B cell (primary cell): ENCODE measurements at regions of chr6 and their contacts with region 1.

Region 1: GRCh38 chr6:132354512-132355167 is 46.6 kb downstream of the MOXD1 start:
- DNase-seq: peak; percentile 94
- ATAC-seq: peak; percentile 87
- H3K4me3 ChIP-seq: peak overlapping the region in 4 of 5 experiments; percentile 10 to 37 (median 17)
- H3K4me3 Mint-ChIP-seq: peak overlapping the region; percentile 67
- H3K27ac ChIP-seq: peak overlapping the region; percentile 89 to 95
- H3K27ac Mint-ChIP-seq: peak overlapping the region; percentile 89
- H3K4me1 ChIP-seq: peaks cover 43 to 63% of the 10 kb centered on the region in 2 donors
- H3K4me1 Mint-ChIP-seq: peaks cover 67% of the 10 kb centered on the region
- H3K27me3 ChIP-seq: no peaks in the 10 kb centered on the region
- H3K27me3 Mint-ChIP-seq: no peaks in the 10 kb centered on the region
- CTCF ChIP-seq: no peak

Region 2: GRCh38 chr6:131627724-131628682 is 726.6 kb before region 1 on chr6 and contains the start of gene MED23:
- CTCF ChIA-PET with region 1: no interaction called
- POLR2A ChIA-PET with region 1: no interaction called
- intact Hi-C with region 1: loop called (anchors 2 kb)
- DNase-seq: peak; percentile 97
- ATAC-seq: peak; percentile 97
- H3K4me3 ChIP-seq: peak within 1 kb of the TSS; percentile 82 to 95 (median 87)
- H3K4me3 Mint-ChIP-seq: peak within 1 kb of the TSS; percentile 98
- H3K27ac ChIP-seq: peak within 1 kb of the TSS; percentile 58 to 71
- H3K27ac Mint-ChIP-seq: peak within 1 kb of the TSS; percentile 94
- H3K4me1 ChIP-seq: peaks cover 9 to 11% of the 10 kb centered on the region in 2 donors
- H3K4me1 Mint-ChIP-seq: peaks cover 25% of the 10 kb centered on the region
- H3K27me3 ChIP-seq: no peaks in the 10 kb centered on the region
- H3K27me3 Mint-ChIP-seq: peaks cover under 1% of the 10 kb centered on the region
- CTCF ChIP-seq: peak; percentile 97
- total RNA-seq, gene MED23: 55.4 and 57.1 TPM in 2 replicates

Region 3: GRCh38 chr6:132380358-132381029 is 25.9 kb after region 1 on chr6:
- CTCF ChIA-PET with region 1: interaction called, 6 read pairs
- POLR2A ChIA-PET with region 1: interaction called, 16 read pairs
- intact Hi-C with region 1: loop called (anchors 1 kb)
- DNase-seq: no peak
- ATAC-seq: no peak
- H3K4me3 ChIP-seq: no peak overlapping the region
- H3K4me3 Mint-ChIP-seq: no peak overlapping the region
- H3K27ac ChIP-seq: no peak overlapping the region
- H3K27ac Mint-ChIP-seq: no peak overlapping the region
- H3K4me1 ChIP-seq: peaks cover 4 to 14% of the 10 kb centered on the region in 2 donors
- H3K4me1 Mint-ChIP-seq: peaks cover 19% of the 10 kb centered on the region
- H3K27me3 ChIP-seq: no peaks in the 10 kb centered on the region
- H3K27me3 Mint-ChIP-seq: no peaks in the 10 kb centered on the region
- CTCF ChIP-seq: no peak

Region 4: GRCh38 chr6:132401120-132401945 is 46.7 kb after region 1 on chr6 and contains the start of gene MOXD1:
- CTCF ChIA-PET with region 1: interaction called, 3 read pairs
- POLR2A ChIA-PET with region 1: no interaction called
- intact Hi-C with region 1: loop called (anchors 10 kb)
- DNase-seq: peak; percentile 64
- ATAC-seq: peak; percentile 83
- H3K4me3 ChIP-seq: peak within 1 kb of the TSS; percentile 51 to 84 (median 73)
- H3K4me3 Mint-ChIP-seq: peak within 1 kb of the TSS; percentile 88
- H3K27ac ChIP-seq: no peak within 1 kb of the TSS
- H3K27ac Mint-ChIP-seq: peak within 1 kb of the TSS; percentile 76
- H3K4me1 ChIP-seq: peaks cover 13 to 14% of the 10 kb centered on the region in 2 donors
- H3K4me1 Mint-ChIP-seq: peaks cover 24% of the 10 kb centered on the region
- H3K27me3 ChIP-seq: peaks cover 0 to 19% (median 11%) of the 10 kb centered on the region in 4 experiments
- H3K27me3 Mint-ChIP-seq: peaks cover 20% of the 10 kb centered on the region
- CTCF ChIP-seq: no peak
- total RNA-seq, gene MOXD1: 6.7 and 7.0 TPM in 2 replicates

Region 5: DNA sequence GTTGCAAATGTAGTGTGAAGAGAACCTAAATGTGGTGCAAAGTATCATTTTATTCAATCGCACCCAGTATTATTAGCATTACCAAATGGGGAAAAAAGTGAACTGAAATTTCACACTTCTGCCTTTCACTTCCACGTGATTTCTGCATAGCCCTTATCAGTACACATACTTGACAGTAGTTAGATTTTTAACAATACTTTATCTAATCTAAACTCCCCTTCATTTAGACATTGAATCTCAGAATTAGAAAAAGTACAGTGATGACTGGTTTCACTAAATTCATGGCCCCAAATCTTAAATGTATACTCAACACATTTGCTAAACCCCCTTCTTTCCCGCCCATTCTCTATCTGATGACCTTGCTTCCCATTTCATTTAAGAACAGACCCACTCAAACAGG is 144.0 kb after region 1 on chr6:
- CTCF ChIA-PET with region 1: interaction called, 10 read pairs
- POLR2A ChIA-PET with region 1: no interaction called
- intact Hi-C with region 1: loop called (anchors 5 kb)
- DNase-seq: peak; percentile 71
- ATAC-seq: peak; percentile 70
- H3K4me3 ChIP-seq: peak overlapping the region in 1 of 5 experiments; percentile 49
- H3K4me3 Mint-ChIP-seq: peak overlapping the region; percentile 74
- H3K27ac ChIP-seq: peak overlapping the region; percentile 73 to 88
- H3K27ac Mint-ChIP-seq: peak overlapping the region; percentile 87
- H3K4me1 ChIP-seq: peaks cover 81 to 84% of the 10 kb centered on the region in 2 donors
- H3K4me1 Mint-ChIP-seq: peaks cover 85% of the 10 kb centered on the region
- H3K27me3 ChIP-seq: no peaks in the 10 kb centered on the region
- H3K27me3 Mint-ChIP-seq: no peaks in the 10 kb centered on the region
- CTCF ChIP-seq: no peak

Region 6: GRCh38 chr6:132758761-132759160 is 404.1 kb after region 1 on chr6:
- CTCF ChIA-PET with region 1: no interaction called
- POLR2A ChIA-PET with region 1: interaction called, 12 read pairs
- intact Hi-C with region 1: no loop called
- DNase-seq: no peak
- ATAC-seq: no peak
- H3K4me3 ChIP-seq: no peak overlapping the region
- H3K4me3 Mint-ChIP-seq: peak overlapping the region; percentile 26
- H3K27ac ChIP-seq: peak overlapping the region in 1 of 2 donors; percentile 57
- H3K27ac Mint-ChIP-seq: peak overlapping the region; percentile 80
- H3K4me1 ChIP-seq: peaks cover 36 to 55% of the 10 kb centered on the region in 2 donors
- H3K4me1 Mint-ChIP-seq: peaks cover 44% of the 10 kb centered on the region
- H3K27me3 ChIP-seq: no peaks in the 10 kb centered on the region
- H3K27me3 Mint-ChIP-seq: no peaks in the 10 kb centered on the region
- CTCF ChIP-seq: no peak

Region 7: GRCh38 chr6:134235937-134236751 is 1881.5 kb after region 1 on chr6:
- CTCF ChIA-PET with region 1: no interaction called
- POLR2A ChIA-PET with region 1: no interaction called
- intact Hi-C with region 1: loop called (anchors 10 kb)
- DNase-seq: peak; percentile 87
- ATAC-seq: peak; percentile 84
- H3K4me3 ChIP-seq: peak overlapping the region in 1 of 5 experiments; percentile 10
- H3K4me3 Mint-ChIP-seq: peak overlapping the region; percentile 52
- H3K27ac ChIP-seq: peak overlapping the region; percentile 94 to 97
- H3K27ac Mint-ChIP-seq: peak overlapping the region; percentile 93
- H3K4me1 ChIP-seq: peaks cover 42 to 47% of the 10 kb centered on the region in 2 donors
- H3K4me1 Mint-ChIP-seq: peaks cover 46% of the 10 kb centered on the region
- H3K27me3 ChIP-seq: no peaks in the 10 kb centered on the region
- H3K27me3 Mint-ChIP-seq: no peaks in the 10 kb centered on the region
- CTCF ChIP-seq: no peak